ENCODE measurements at regions of chr2 and their contacts with region 1.

Region 1: DNA sequence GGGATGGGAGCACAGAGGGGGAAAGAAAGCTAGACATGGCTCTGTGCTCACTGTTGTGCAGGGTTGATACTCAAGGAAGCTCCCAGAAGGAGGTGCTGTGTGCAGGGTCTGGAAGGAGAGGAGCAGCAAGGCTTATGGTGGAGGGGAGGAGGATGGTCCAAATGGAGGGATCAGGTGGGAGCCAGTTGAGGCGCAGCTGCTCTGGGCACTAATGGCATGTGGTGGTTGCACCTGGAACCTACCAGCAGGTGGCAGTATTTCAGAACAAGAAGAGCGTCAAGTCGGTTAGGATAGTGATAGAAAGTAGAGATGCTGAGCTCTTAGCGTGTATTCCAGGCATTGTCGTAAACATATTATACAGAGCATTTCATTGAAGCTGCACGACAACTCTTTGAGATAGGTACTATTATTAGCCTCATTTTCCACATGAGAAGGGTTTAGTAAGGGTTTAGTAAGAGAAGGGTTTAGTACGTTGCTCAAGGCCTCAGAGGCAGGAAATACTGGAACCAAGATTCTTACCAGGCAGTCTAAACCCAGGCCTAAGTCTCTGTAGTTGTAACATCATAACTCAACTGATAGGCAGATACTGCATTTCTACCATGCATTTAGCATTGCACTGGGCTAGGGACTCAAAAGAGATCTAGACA is 223.7 kb downstream of the CYP26B1 start:
- DNase-seq: peak; percentile 77
- H3K4me3 Mint-ChIP-seq: no peak overlapping the region
- H3K27ac Mint-ChIP-seq: no peak overlapping the region
- H3K4me1 Mint-ChIP-seq: no peaks in the 10 kb centered on the region
- H3K27me3 Mint-ChIP-seq: peaks cover 18% of the 10 kb centered on the region
- CTCF ChIP-seq: peak; percentile 79

Region 2: GRCh38 chr2:72115552-72116546 is 191.8 kb after region 1 on chr2:
- CTCF ChIA-PET with region 1: interaction called, 19 read pairs
- intact Hi-C with region 1: no loop called
- DNase-seq: peak; percentile 96
- H3K4me3 Mint-ChIP-seq: peak overlapping the region; percentile 56
- H3K27ac Mint-ChIP-seq: peak overlapping the region; percentile 77
- H3K4me1 Mint-ChIP-seq: peaks cover 16% of the 10 kb centered on the region
- H3K27me3 Mint-ChIP-seq: peaks cover 14% of the 10 kb centered on the region
- CTCF ChIP-seq: peak; percentile 64

Measured in Calu3 (cell line).